ENCODE measurements at regions of chr4 and their contacts with region 1.

Region 1: GRCh38 chr4:138859249-138859648 is 156.3 kb upstream of the NOCT start:
- DNase-seq: no peak
- ATAC-seq: no peak

Region 2: DNA sequence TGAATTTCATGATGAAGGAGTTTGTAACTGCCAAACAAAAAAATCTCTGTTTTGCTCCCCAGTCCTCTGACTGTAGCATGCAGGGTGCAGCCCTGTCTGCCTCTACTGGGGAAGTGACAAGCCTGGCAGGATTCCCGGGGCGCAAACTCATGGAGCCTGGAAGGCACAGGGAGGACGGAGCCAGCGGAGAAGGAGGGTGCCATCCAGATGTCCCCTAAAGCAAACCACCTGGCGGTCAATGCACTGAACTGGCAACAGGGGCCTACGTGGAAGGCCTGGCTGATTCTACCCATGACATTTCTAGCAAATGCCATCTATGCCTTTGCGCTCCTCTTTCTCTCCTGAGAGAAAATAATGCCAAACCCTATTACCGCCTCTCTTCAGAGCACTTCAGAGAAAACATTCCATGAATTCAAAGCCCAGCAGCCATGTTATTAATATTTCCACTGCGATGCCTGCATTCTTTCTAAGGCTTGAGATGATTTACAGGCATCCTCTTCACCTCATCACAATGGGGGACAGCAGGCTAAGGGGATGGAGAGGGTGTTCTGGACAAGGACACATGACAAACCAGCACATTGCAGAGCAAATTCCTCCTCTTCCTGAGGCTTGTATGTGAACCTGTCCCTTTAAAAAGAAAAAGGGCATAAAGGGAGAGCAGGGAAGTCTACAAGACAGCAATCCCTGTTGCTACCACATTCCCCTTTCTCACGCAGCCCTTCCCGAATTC is 173.0 kb before region 1 on chr4:
- intact Hi-C with region 1: loop called (anchors 5 kb)
- DNase-seq: peak; percentile 74
- ATAC-seq: peak; percentile 66

Region 3: DNA sequence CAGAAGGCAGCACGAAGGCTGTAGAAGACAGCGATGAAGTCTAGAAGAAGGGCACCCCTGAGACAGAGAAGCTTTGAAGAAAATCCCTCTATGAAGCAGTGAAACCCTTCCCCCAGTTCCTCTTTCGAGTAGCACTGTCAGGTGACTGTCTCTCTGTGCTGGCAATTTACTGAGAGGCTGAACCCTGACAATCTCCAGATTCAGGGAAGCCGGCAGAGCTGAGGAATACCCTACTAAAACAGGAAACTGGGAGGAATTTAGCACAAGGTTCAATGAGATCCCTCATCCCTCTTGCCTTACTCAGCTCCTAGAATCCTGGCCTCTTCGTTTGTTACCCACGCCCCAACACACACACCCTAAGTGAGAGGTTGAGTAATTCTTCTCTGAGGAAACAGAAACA is 83.4 kb before region 1 on chr4:
- intact Hi-C with region 1: no loop called
- DNase-seq: no peak
- ATAC-seq: no peak

Measured in Right ventricle myocardium inferior (tissue), 1 donor.